CD8-positive, alpha-beta T cell (primary cell): ENCODE measurements at regions of chr1 and their contacts with region 1.

Region 1: GRCh38 chr1:109483672-109484518 is at the start of gene ATXN7L2:
- DNase-seq: peak; percentile 87 to 97 (median 92)
- ATAC-seq: peak; percentile 81
- H3K4me3 ChIP-seq: peak within 1 kb of the TSS; percentile 78 to 90
- H3K4me3 Mint-ChIP-seq: peak within 1 kb of the TSS; percentile 94
- H3K27ac ChIP-seq: peak within 1 kb of the TSS; percentile 78 to 93
- H3K27ac Mint-ChIP-seq: peak within 1 kb of the TSS; percentile 91
- H3K4me1 ChIP-seq: peaks cover 22% of the 10 kb centered on the region
- H3K4me1 Mint-ChIP-seq: peaks cover 35% of the 10 kb centered on the region
- H3K27me3 ChIP-seq: no peaks in the 10 kb centered on the region
- H3K27me3 Mint-ChIP-seq: peaks cover 2% of the 10 kb centered on the region
- CTCF ChIP-seq: no peak
- total RNA-seq, gene ATXN7L2: 16.8 to 19.4 TPM

Region 2: GRCh38 chr1:109099938-109100773 is 383.7 kb before region 1 on chr1:
- CTCF ChIA-PET with region 1: no interaction called
- POLR2A ChIA-PET with region 1: no interaction called
- intact Hi-C with region 1: loop called in 1 of 2 experiments (anchors 2 kb)
- DNase-seq: peak; percentile 95 to 98 (median 97)
- ATAC-seq: peak; percentile 91
- H3K4me3 ChIP-seq: peak overlapping the region; percentile 88 to 93
- H3K4me3 Mint-ChIP-seq: peak overlapping the region; percentile 98
- H3K27ac ChIP-seq: peak overlapping the region; percentile 86 to 93
- H3K27ac Mint-ChIP-seq: peak overlapping the region; percentile 99
- H3K4me1 ChIP-seq: peaks cover 9% of the 10 kb centered on the region
- H3K4me1 Mint-ChIP-seq: peaks cover 18% of the 10 kb centered on the region
- H3K27me3 ChIP-seq: no peaks in the 10 kb centered on the region
- H3K27me3 Mint-ChIP-seq: no peaks in the 10 kb centered on the region
- CTCF ChIP-seq: peak; percentile 83

Region 3: GRCh38 chr1:109248797-109249642 is 234.9 kb before region 1 on chr1 and contains the start of gene CELSR2:
- CTCF ChIA-PET with region 1: no interaction called
- POLR2A ChIA-PET with region 1: no interaction called
- intact Hi-C with region 1: loop called in 1 of 2 experiments (anchors 1 kb)
- DNase-seq: peak; percentile 21 to 83 (median 57)
- ATAC-seq: peak; percentile 97
- H3K4me3 ChIP-seq: peak within 1 kb of the TSS; percentile 39 to 41
- H3K4me3 Mint-ChIP-seq: peak within 1 kb of the TSS; percentile 72
- H3K27ac ChIP-seq: no peak within 1 kb of the TSS
- H3K27ac Mint-ChIP-seq: no peak within 1 kb of the TSS
- H3K4me1 ChIP-seq: peaks cover 14% of the 10 kb centered on the region
- H3K4me1 Mint-ChIP-seq: peaks cover 14% of the 10 kb centered on the region
- H3K27me3 ChIP-seq: peaks cover 0 to 3% of the 10 kb centered on the region in 2 experiments
- H3K27me3 Mint-ChIP-seq: peaks cover 8% of the 10 kb centered on the region
- CTCF ChIP-seq: no peak
- total RNA-seq, gene CELSR2: 3.8 TPM

Region 4: DNA sequence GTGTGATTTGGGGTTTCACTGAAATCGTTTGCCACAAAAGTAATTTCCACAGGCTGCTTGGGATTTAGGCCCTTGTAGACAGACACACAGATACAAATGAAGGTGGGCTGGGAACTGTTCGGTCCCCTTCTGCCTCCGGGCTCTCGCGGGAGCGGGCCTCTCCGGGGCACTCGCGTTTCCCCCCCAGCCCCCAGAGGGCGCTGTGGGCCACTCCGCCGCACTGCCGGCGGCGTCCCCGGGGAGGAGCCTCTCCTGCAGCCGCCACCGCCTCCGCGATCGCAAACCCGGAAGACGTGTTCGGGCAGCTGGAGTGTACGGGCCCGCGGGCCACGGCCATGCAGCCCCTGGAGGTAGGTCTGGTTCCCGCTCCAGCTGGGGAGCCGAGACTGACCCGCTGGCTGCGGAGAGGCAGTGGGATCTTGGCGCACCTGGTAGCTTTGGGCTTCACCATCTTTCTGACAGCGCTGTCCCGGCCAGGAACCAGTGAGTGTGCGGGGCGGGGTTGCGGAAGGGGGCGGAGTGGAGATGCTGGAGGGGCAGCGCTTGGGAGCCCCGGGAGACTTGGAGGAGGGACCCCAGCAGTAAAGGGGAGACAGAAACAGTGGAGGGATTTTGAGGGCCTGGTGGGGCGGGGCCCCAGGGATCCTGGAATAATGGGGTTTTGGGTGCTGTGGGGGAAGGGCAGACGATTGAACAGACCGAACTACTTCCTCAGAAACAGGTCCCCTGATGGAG is 10.1 kb after region 1 on chr1 and contains the start of gene CYB561D1:
- CTCF ChIA-PET with region 1: interaction called, 681 read pairs
- POLR2A ChIA-PET with region 1: interaction called, 23 read pairs
- intact Hi-C with region 1: loop called (anchors 1 kb)
- DNase-seq: peak; percentile 79 to 95 (median 88)
- ATAC-seq: peak; percentile 90
- H3K4me3 ChIP-seq: peak within 1 kb of the TSS; percentile 94 to 95
- H3K4me3 Mint-ChIP-seq: peak within 1 kb of the TSS; percentile 95
- H3K27ac ChIP-seq: peak within 1 kb of the TSS; percentile 53 to 58
- H3K27ac Mint-ChIP-seq: peak within 1 kb of the TSS; percentile 85
- H3K4me1 ChIP-seq: peaks cover 49% of the 10 kb centered on the region
- H3K4me1 Mint-ChIP-seq: peaks cover 52% of the 10 kb centered on the region
- H3K27me3 ChIP-seq: no peaks in the 10 kb centered on the region
- H3K27me3 Mint-ChIP-seq: no peaks in the 10 kb centered on the region
- CTCF ChIP-seq: peak; percentile 88
- total RNA-seq, gene CYB561D1: 10.2 to 12.3 TPM

Region 5: GRCh38 chr1:109509176-109510134 is 25.6 kb after region 1 on chr1 and contains the start of gene AMIGO1:
- CTCF ChIA-PET with region 1: interaction called, 681 read pairs
- POLR2A ChIA-PET with region 1: interaction called, 14 read pairs
- intact Hi-C with region 1: no loop called
- DNase-seq: peak; percentile 21 to 86 (median 66)
- ATAC-seq: peak; percentile 79
- H3K4me3 ChIP-seq: peak within 1 kb of the TSS; percentile 67 to 83
- H3K4me3 Mint-ChIP-seq: peak within 1 kb of the TSS; percentile 91
- H3K27ac ChIP-seq: peak within 1 kb of the TSS; percentile 45 to 54
- H3K27ac Mint-ChIP-seq: peak within 1 kb of the TSS; percentile 94
- H3K4me1 ChIP-seq: peaks cover 67% of the 10 kb centered on the region
- H3K4me1 Mint-ChIP-seq: peaks cover 68% of the 10 kb centered on the region
- H3K27me3 ChIP-seq: no peaks in the 10 kb centered on the region
- H3K27me3 Mint-ChIP-seq: no peaks in the 10 kb centered on the region
- CTCF ChIP-seq: no peak
- total RNA-seq, gene AMIGO1: 8.6 to 9.6 TPM

Region 6: DNA sequence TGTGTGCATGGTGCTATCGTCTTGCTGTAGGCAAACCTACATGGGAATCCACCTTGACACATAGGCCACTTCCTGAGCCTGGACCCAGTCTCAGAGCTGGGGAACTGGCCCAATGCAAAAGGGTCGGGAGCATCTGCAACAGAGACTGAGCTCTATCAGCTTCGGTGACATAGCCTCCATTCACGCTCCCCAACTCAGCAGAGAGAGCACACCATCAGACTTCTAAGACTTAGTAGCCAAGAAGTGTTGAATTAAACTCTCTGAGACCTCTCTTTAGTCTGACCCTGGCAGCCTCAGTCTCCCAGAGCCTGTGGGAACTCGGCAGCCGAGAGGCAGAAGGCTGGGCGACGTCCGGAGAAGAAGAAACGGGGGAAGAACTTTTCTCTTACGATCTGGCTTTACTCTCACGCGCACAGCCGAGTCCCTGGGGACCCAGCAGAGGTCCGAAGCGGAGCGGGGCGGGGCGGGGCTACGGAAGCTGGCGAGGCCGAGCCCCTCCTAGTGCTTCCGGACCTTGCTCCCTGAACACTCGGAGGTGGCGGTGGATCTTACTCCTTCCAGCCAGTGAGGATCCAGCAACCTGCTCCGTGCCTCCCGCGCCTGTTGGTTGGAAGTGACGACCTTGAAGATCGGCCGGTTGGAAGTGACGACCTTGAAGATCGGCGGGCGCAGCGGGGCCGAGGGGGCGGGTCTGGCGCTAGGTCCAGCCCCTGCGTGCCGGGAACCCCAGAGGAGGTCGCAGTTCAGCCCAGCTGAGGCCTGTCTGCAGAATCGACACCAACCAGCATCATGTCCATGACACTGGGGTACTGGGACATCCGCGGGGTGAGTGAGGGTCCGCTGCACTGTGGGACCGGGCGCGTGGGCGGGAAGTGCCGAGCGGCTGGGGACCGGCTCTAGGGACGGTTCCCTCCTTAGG is 172.0 kb after region 1 on chr1 and contains the start of gene GSTM4:
- CTCF ChIA-PET with region 1: no interaction called
- POLR2A ChIA-PET with region 1: no interaction called
- intact Hi-C with region 1: no loop called
- DNase-seq: peak in 8 of 9 experiments; percentile 42 to 83 (median 66)
- ATAC-seq: peak; percentile 86
- H3K4me3 ChIP-seq: peak within 1 kb of the TSS; percentile 66 to 99
- H3K4me3 Mint-ChIP-seq: peak within 1 kb of the TSS; percentile 94
- H3K27ac ChIP-seq: peak within 1 kb of the TSS; percentile 55 to 77
- H3K27ac Mint-ChIP-seq: peak within 1 kb of the TSS; percentile 90
- H3K4me1 ChIP-seq: peaks cover 7% of the 10 kb centered on the region
- H3K4me1 Mint-ChIP-seq: peaks cover 22% of the 10 kb centered on the region
- H3K27me3 ChIP-seq: no peaks in the 10 kb centered on the region
- H3K27me3 Mint-ChIP-seq: no peaks in the 10 kb centered on the region
- CTCF ChIP-seq: no peak
- total RNA-seq, gene GSTM4: 9.5 to 10.5 TPM